Mammary epithelial cell (primary cell): ENCODE measurements at regions of chr6 and their contacts with region 1.

Region 1: GRCh38 chr6:130676077-130676772 is 151.0 kb upstream of the SMLR1 start:
- DNase-seq: no peak
- H3K4me3 ChIP-seq: no peak overlapping the region
- H3K27ac ChIP-seq: no peak overlapping the region
- H3K4me1 ChIP-seq: peaks cover 20% of the 10 kb centered on the region
- H3K27me3 ChIP-seq: no peaks in the 10 kb centered on the region
- CTCF ChIP-seq: peak in 1 of 2 donors; percentile 41

Region 2: DNA sequence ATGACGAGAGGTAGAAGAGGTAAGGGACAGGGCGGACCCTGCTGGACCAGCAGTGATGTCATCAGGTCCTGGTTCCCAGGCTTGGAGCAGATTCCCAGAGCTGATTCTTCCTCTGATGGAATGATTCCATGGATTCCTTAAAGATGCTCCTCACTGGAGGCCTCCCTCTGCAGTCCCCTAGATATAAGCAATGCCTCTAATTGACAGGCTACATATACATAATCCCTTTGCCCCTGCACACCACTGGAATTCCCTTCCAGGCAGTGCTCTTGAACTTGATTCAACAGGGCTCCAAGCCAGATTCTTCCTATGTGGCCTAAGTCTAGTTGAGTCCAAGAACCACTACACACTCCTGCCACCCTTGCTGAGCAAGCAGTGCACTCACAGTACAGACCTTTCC is 710.1 kb before region 1 on chr6:
- CTCF ChIA-PET with region 1: no interaction called
- dilution Hi-C with region 1: no loop called
- in situ Hi-C with region 1: no loop called
- intact Hi-C with region 1: no loop called
- DNase-seq: no peak
- H3K4me3 ChIP-seq: no peak overlapping the region
- H3K27ac ChIP-seq: no peak overlapping the region
- H3K4me1 ChIP-seq: no peaks in the 10 kb centered on the region
- H3K27me3 ChIP-seq: no peaks in the 10 kb centered on the region
- CTCF ChIP-seq: no peak

Region 3: DNA sequence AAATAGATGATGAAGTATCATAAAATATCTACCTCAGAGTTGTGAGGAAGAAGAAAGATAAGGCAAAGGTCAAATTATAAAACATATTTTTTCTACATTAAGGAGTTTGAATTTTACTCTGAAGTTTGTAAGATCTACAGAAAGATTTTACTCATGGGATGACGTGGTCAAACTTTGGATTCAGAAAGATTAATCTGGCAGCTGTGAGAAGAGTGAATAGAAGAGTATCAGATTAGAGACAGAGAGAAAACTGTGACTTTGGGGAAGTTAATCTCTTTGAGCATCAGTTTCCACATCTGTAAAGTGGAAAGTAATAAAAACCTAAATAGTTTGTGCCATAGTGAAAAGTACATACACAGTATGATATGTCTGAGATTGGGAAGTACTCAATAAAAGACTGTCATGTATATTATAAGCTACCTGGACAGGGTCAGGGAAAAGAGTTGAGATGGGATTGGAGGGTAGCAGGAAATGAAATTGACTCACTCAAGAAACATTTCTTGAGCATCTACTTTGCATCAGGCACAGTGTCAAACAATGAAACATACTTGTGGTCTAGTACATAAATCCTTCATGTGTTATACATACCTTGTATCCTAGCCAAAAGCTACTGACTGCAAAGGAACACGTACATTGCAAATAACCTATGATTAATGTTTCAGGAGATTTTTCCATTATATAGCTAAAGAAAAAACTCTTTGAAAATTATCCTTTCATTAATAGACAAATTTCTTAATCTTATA is 88.3 kb before region 1 on chr6:
- CTCF ChIA-PET with region 1: no interaction called
- dilution Hi-C with region 1: no loop called
- in situ Hi-C with region 1: no loop called
- intact Hi-C with region 1: loop called (anchors 5 kb)
- DNase-seq: peak; percentile 84
- H3K4me3 ChIP-seq: no peak overlapping the region
- H3K27ac ChIP-seq: peak overlapping the region; percentile 39
- H3K4me1 ChIP-seq: peaks cover 7% of the 10 kb centered on the region
- H3K27me3 ChIP-seq: no peaks in the 10 kb centered on the region
- CTCF ChIP-seq: no peak

Region 4: DNA sequence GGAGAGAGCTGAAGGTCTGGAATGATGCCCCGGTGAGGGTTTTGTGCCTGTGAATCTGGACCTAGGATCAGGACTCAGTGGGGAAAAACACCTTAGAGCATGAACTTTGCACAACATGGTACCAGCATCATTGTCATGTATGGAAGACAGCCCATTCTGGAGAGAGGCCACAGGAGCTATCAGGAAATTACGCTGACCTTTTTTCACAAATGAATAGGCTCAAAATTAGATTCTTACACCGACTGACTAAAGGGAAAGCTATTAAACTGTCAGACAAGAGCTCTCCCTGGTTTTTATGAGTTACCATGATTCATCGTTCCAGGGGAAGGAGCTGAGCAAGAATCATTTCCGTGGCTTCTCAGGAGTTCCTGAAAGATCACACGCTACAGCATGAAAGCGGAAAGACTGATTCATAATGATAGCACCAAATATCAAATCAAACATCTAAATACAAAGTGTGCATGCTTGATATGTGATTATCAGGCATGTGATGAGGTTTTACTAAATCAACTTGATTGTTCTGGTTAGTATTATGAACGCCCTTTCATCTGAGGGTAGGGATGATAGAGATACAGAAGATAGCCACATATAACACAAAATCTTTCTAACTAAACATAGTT is 74.0 kb before region 1 on chr6:
- CTCF ChIA-PET with region 1: no interaction called
- dilution Hi-C with region 1: no loop called
- in situ Hi-C with region 1: no loop called
- intact Hi-C with region 1: loop called (anchors 2 kb)
- DNase-seq: peak; percentile 98
- H3K4me3 ChIP-seq: no peak overlapping the region
- H3K27ac ChIP-seq: peak overlapping the region; percentile 92
- H3K4me1 ChIP-seq: peaks cover 55% of the 10 kb centered on the region
- H3K27me3 ChIP-seq: no peaks in the 10 kb centered on the region
- CTCF ChIP-seq: no peak

Region 5: GRCh38 chr6:130655586-130655985 is 20.6 kb before region 1 on chr6:
- CTCF ChIA-PET with region 1: no interaction called
- dilution Hi-C with region 1: no loop called
- in situ Hi-C with region 1: no loop called
- intact Hi-C with region 1: no loop called
- DNase-seq: no peak
- H3K4me3 ChIP-seq: no peak overlapping the region
- H3K27ac ChIP-seq: no peak overlapping the region
- H3K4me1 ChIP-seq: no peaks in the 10 kb centered on the region
- H3K27me3 ChIP-seq: no peaks in the 10 kb centered on the region
- CTCF ChIP-seq: no peak